Mammary epithelial cell (primary cell): ENCODE measurements at regions of chr13 and their contacts with region 1.

Region 1: DNA sequence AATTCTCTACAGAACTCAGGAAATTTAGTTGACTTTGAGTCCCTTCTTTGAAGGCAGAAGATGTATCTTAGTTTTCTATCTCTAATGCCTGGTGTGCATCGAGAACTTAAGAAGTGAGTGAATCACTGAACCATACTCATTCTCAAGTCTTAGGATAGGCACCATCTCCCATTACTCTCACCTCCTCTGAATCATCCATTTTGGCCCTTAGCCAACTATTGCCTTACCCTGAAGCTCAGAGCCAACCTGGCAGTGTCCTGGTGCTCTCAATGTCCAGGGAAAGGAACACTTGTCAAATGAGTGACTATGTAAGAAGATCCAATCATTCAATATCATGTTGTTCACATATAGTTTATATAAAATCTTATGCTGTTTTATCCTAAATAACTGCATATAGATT is 146.6 kb downstream of the RGCC start:
- DNase-seq: peak; percentile 89
- H3K4me3 ChIP-seq: no peak overlapping the region
- H3K27ac ChIP-seq: peak overlapping the region; percentile 50
- H3K4me1 ChIP-seq: peaks cover 14% of the 10 kb centered on the region
- H3K27me3 ChIP-seq: no peaks in the 10 kb centered on the region
- CTCF ChIP-seq: no peak

Region 2: DNA sequence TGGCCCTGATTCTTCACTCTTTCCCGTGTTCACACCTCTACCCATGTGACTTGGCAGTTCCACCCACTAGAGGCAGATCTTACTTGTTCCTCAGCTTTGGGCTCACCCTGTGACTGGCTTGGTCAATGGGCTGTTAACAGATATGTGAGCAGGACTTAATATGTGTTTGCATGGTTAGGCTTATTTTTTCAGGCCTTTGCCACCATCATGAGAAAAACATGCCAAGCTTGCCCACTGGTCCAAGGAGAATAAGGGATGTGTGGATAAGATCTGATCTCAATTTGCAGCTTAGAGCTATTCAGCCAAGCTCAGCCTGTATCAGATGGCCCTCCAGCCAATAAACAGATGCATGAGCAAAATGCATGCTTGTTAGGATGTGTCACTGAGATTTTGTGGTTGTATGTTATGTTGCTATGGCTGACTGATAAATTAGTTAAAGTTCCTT is 98.6 kb before region 1 on chr13:
- CTCF ChIA-PET with region 1: no interaction called
- dilution Hi-C with region 1: loop called (anchors 5 kb)
- in situ Hi-C with region 1: no loop called
- intact Hi-C with region 1: no loop called
- DNase-seq: peak; percentile 80
- H3K4me3 ChIP-seq: no peak overlapping the region
- H3K27ac ChIP-seq: no peak overlapping the region
- H3K4me1 ChIP-seq: peaks cover 16% of the 10 kb centered on the region
- H3K27me3 ChIP-seq: no peaks in the 10 kb centered on the region
- CTCF ChIP-seq: no peak

Region 3: GRCh38 chr13:41973247-41973741 is 369.4 kb after region 1 on chr13:
- CTCF ChIA-PET with region 1: no interaction called
- dilution Hi-C with region 1: no loop called
- in situ Hi-C with region 1: no loop called
- intact Hi-C with region 1: no loop called
- DNase-seq: no peak
- H3K4me3 ChIP-seq: no peak overlapping the region
- H3K27ac ChIP-seq: no peak overlapping the region
- H3K4me1 ChIP-seq: peaks cover 6% of the 10 kb centered on the region
- H3K27me3 ChIP-seq: no peaks in the 10 kb centered on the region
- CTCF ChIP-seq: peak; percentile 16 to 33